Posterior vena cava (tissue), 2 donors: ENCODE measurements at regions of chr2 and their contacts with region 1.

Region 1: GRCh38 chr2:10036095-10036884 is 7.1 kb upstream of the KLF11 start:
- DNase-seq: peak; percentile 92

Region 2: DNA sequence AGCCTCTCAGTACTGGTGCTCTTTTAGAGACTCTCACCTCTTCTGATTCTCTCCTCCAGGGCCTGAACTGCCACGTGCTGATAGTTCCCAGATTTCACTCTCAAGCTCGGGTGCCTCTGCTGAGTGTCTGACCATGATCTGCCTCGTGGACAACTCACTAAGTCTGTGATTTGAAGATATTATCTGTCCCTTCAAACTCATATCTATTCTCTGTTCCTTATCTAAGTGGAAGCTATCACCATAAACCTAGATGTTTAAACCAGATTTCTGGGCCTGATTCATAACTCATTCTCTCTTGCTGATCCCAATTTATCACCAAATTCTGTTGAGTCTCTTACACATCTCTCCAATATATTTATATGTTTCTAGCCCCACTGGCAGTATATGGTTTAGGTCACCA is 1168.9 kb before region 1 on chr2:
- intact Hi-C with region 1: loop called in 1 of 2 experiments (anchors 5 kb)
- DNase-seq: no peak